G401 (cell line): ENCODE measurements at regions of chr15 and their contacts with region 1.

Region 1: DNA sequence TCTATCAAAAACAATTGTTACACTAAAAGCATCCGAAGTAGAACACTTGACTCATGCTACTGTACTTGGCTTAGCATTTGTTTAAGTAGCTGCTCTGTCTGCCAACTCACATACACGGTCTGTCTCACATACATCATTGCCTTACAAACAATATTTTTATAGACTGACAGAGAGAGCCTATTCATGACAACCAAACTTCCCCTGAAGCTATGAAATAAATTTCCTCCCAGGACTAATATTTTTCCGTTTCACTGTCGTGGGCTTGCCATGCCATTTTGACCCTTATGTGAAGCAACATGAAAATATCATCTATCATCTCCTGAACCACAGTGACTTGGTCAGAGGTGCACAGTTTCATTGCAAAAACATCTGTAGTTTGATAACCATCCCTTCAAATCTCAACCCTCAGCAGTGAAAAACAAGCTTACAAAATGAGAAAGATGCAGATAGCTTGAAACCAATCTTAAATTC is 66.5 kb upstream of the PYGO1 start:
- DNase-seq: no peak

Region 2: GRCh38 chr15:55775316-55775715 is 120.7 kb after region 1 on chr15:
- in situ Hi-C with region 1: loop called (anchors 10 kb)
- DNase-seq: no peak